Stomach (tissue), 19 donors: ENCODE measurements at regions of chr4 and their contacts with region 1.

Region 1: GRCh38 chr4:13548984-13549546 is 4.8 kb upstream of the NKX3-2 start:
- DNase-seq: peak; percentile 81 to 93
- H3K4me3 ChIP-seq: peak overlapping the region; percentile 23 to 35 (median 29)
- H3K27ac ChIP-seq: no peak overlapping the region
- H3K4me1 ChIP-seq: peaks cover 28 to 44% (median 38%) of the 10 kb centered on the region in 4 donors
- H3K27me3 ChIP-seq: peaks cover 22 to 84% (median 68%) of the 10 kb centered on the region in 3 donors
- CTCF ChIP-seq: peak in 5 of 7 experiments; percentile 64 to 90 (median 83)
- EP300 ChIP-seq: no peak
- POLR2A ChIP-seq: no peak

Region 2: GRCh38 chr4:12734586-12734985 is 814.5 kb before region 1 on chr4:
- intact Hi-C with region 1: loop called (anchors 10 kb)
- DNase-seq: no peak
- H3K4me3 ChIP-seq: no peak overlapping the region
- H3K27ac ChIP-seq: no peak overlapping the region
- H3K4me1 ChIP-seq: no peaks in the 10 kb centered on the region
- H3K27me3 ChIP-seq: peaks cover 0 to 4% (median 0%) of the 10 kb centered on the region in 3 donors
- CTCF ChIP-seq: no peak
- EP300 ChIP-seq: no peak
- POLR2A ChIP-seq: no peak

Region 3: DNA sequence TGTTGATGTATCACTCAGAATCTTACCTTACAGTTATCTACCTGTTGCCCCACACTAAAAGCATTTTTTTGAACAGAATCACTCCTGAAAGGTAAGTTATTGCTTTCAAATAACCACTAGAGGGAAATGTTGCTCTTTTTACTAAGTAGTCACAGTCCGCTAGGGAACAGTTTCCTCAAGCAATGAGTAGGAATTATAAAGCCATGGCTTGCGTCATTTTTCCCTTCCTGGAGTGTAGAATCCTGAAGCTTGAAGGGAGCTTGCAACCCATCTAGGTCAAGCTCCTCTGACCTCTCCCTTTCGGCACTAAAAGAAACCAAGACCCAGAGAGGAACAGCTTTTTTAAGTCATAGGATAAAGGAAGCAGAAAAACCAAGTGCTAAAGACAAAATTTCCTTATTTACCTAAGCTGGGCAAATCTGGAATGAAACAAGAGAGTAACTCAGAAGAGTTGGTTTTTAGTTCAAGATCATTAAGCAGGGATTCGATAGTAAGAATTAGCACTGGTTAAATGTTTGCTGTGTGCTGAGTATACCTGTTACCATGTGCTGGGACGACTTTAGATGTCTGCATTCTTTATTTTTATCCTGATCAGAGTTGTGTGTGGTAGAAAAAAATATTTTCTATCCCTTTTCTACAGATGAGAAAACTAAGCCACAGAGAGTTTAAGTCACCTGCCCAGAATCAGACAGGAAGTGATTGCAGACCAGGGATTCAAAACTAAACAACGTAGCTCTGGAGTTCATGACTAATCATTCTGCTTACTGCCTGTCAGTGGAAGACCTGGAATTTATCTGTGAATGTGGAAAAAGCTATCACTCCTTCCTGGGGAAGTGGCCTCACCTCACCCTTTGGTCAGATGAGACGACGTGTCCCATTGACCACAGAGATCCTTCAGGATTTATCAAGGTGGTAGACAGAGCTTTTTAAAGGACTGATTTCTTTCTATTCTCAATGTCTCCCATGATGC is 696.4 kb before region 1 on chr4:
- intact Hi-C with region 1: loop called (anchors 5 kb)
- DNase-seq: peak in 1 of 2 donors; percentile 84
- H3K4me3 ChIP-seq: no peak overlapping the region
- H3K27ac ChIP-seq: no peak overlapping the region
- H3K4me1 ChIP-seq: peaks cover 0 to 6% (median 3%) of the 10 kb centered on the region in 4 donors
- H3K27me3 ChIP-seq: peaks cover 0 to 19% (median 0%) of the 10 kb centered on the region in 3 donors
- CTCF ChIP-seq: peak in 5 of 7 experiments; percentile 42 to 73 (median 53)
- EP300 ChIP-seq: no peak
- POLR2A ChIP-seq: no peak

Region 4: DNA sequence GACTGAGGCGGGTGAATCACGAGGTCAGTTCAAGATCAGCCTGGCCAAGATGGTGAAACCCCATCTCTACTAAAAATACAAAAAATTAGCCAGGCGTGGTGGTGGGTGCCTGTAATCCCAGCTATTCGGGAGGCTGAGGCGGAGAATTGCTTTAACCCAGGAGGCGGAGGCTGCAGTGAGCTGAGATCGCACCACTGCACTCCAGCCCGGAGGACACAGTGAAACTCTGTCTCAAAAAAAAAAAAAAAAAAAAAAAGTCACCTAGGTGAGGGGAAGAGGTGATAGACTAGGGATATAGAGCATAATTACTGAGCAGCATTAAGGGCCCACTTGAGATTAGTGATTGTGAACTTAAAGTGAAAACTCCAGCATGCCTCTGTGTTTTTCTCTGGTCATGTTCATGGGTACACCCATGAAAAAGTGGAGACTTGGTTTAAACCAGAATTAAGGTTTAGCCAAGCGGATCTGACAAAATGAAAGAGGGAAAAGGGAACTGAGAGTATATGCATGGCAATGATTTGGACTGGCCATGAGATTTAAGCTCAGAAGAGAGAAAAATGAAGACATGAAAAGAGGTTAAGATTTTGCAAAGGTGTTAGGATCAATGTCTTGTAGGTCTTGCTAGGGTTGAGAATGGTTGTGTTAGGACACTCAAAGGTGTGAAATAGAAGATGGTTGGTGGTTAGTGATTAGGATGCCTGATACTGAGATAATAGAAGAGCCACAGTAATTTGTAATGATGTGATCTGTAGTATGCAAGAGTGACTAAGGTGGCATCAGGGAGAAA is 169.9 kb before region 1 on chr4:
- intact Hi-C with region 1: no loop called
- DNase-seq: no peak
- H3K4me3 ChIP-seq: no peak overlapping the region
- H3K27ac ChIP-seq: no peak overlapping the region
- H3K4me1 ChIP-seq: no peaks in the 10 kb centered on the region
- H3K27me3 ChIP-seq: no peaks in the 10 kb centered on the region
- CTCF ChIP-seq: no peak
- EP300 ChIP-seq: no peak
- POLR2A ChIP-seq: no peak